Right lobe of liver (tissue), 6 donors: ENCODE measurements at regions of chr6 and their contacts with region 1.

Region 1: GRCh38 chr6:146857180-146857979 is 258.6 kb downstream of the ADGB start:
- DNase-seq: peak; percentile 81 to 88 (median 84)
- ATAC-seq: peak; percentile 92 to 94 (median 94)
- H3K4me3 ChIP-seq: peak overlapping the region in 1 of 3 donors; percentile 33
- H3K27ac ChIP-seq: no peak overlapping the region
- H3K4me1 ChIP-seq: peaks cover 0 to 13% (median 6%) of the 10 kb centered on the region in 4 donors
- H3K27me3 ChIP-seq: no peaks in the 10 kb centered on the region
- CTCF ChIP-seq: peak; percentile 96 to 99 (median 99)
- POLR2A ChIP-seq: no peak

Region 2: DNA sequence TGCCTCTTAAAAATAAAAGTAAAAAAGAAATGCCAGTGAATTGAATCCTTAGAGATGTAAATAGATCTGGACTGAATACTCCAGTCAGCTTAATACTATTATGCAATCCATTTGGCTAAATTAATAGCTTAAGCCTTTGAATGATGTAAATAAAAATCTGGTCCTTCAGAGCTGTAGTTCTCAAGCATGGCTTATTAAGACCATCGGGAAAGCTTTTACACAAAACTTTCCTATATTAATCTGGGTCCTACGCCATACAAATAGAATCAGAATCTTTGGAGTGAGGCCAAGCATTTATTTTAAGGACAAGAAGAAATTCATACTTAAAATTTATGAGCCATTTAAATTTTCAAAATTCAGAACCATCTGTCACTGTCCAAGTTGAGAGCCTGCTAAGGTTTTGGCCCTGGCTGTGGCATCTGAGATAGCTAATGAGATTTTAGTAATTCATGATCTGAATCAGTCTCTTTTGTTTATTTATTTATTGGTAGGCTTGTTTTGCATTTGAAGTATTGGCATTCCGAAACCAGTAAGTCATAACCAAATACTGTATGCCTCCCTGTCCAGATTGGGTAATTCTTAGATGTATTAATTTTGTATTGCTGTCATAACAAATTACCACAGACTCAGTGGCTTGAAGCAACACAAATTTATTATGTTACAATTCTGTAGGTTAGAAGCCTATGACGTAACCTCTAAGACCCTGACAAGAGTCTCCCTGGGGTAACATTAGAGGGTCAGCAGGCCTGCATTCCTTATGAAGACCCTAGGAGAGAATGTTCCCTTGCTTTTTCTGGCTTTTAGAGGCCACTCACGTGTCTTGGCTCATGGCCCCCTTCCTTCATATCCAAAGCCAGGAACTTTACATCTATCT is 541.8 kb before region 1 on chr6:
- intact Hi-C with region 1: no loop called
- DNase-seq: no peak
- ATAC-seq: no peak
- H3K4me3 ChIP-seq: no peak overlapping the region
- H3K27ac ChIP-seq: no peak overlapping the region
- H3K4me1 ChIP-seq: no peaks in the 10 kb centered on the region
- H3K27me3 ChIP-seq: no peaks in the 10 kb centered on the region
- CTCF ChIP-seq: no peak
- POLR2A ChIP-seq: no peak

Region 3: DNA sequence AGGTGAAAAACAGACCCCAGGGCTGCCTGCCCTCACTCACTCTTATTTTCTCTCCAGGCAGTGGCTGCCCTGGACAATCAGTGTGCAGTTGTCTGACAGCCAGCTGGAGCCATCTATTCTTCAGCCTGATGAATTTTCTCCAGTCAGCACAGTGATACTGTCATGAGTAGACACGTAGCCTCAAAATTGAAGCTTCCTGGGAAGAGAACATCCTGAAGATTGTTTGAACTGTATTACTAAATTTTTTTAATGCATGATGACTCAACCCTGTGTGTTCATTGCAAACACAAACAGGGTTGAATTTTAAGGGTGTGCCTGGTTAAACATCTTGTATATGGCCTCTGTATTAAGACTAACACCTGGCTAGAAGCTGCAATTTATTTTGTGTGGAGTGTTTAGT is 297.1 kb after region 1 on chr6:
- intact Hi-C with region 1: no loop called
- DNase-seq: no peak
- ATAC-seq: no peak
- H3K4me3 ChIP-seq: no peak overlapping the region
- H3K27ac ChIP-seq: no peak overlapping the region
- H3K4me1 ChIP-seq: no peaks in the 10 kb centered on the region
- H3K27me3 ChIP-seq: no peaks in the 10 kb centered on the region
- CTCF ChIP-seq: no peak
- POLR2A ChIP-seq: no peak

Region 4: DNA sequence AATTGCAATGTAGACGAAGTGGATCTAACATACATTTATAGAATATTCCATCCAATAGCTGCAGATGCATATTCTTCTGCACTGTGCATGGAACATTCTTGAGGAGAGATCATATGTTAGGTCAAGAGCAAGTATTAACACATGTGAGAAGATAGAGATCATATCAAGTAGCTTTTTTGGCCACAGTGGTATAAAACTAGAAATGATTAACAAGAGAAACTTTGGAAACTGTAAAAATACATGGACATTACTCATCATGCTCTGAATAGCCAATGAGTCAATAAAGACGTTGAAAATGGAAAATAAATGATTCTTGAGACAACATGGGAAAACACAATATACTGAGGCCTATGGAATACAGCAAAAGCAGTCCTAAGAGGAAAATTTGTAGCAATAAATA is 441.1 kb after region 1 on chr6:
- intact Hi-C with region 1: loop called in 1 of 2 experiments (anchors 5 kb)
- DNase-seq: no peak
- ATAC-seq: peak in 1 of 4 donors; percentile 59
- H3K4me3 ChIP-seq: no peak overlapping the region
- H3K27ac ChIP-seq: no peak overlapping the region
- H3K4me1 ChIP-seq: no peaks in the 10 kb centered on the region
- H3K27me3 ChIP-seq: no peaks in the 10 kb centered on the region
- CTCF ChIP-seq: no peak
- POLR2A ChIP-seq: no peak